GM12878 (cell line): ENCODE measurements at regions of chr17 and their contacts with region 1.

Region 1: GRCh38 chr17:75845049-75845860 is 1.1 kb upstream of the UNC13D start:
- DNase-seq: peak; percentile 81
- ATAC-seq: peak; percentile 89
- H3K4me3 ChIP-seq: peak overlapping the region; percentile 77; the same call in 1 of the 2 replicates
- H3K27ac ChIP-seq: peak overlapping the region; percentile 93
- H3K4me1 ChIP-seq: peaks cover 14% of the 10 kb centered on the region
- H3K27me3 ChIP-seq: no peaks in the 10 kb centered on the region
- CTCF ChIP-seq: peak; percentile 71 to 92 (median 89)
- EP300 ChIP-seq: 0 out of 4 replicates have a peak, but pooled peaks of 1 of the 2 experiments have one; percentile 20
- POLR2A ChIP-seq: peak; percentile 59; the same call in 1 of the 2 replicates
- RAD21 ChIP-seq: peak; percentile 50

Region 2: DNA sequence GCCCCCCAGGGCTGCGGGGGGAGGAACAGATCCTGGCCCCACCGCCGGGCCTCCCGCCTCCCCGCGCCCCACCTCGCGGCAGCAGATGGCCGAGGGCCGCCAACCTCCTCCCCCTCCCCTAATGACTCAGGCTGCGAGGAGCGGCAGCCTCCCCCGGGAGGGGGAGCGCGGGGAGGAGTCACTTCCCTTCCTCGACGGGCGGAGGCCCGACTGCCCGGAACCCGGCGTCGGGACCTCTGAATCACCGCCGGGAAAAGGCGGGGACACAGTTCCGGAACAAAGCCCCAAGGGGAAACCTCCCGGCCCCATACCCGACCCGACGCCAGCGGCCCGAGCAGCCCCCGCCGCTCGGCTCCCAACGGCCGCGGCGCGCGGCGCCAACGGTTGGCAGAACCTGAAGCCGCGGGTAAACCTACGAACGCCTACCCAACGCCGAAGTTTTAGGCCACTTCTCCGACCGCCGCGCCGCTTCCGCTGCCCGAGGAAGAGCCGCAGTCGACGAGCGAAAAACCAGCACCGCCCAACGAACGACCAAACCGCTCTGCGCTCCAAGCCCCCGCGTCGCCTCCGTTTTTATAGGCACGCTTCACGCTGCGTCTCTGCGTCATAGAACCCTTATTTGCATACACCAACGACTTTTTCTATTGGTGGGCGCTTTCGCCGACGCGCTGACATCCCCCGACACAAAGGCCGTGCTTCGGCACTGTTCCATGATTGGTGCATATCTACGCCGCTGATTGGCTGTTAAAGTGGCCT is 65.8 kb before region 1 on chr17:
- CTCF ChIA-PET with region 1: interaction called, 6 read pairs
- POLR2A ChIA-PET with region 1: interaction called, 31 read pairs
- RAD21 ChIA-PET with region 1: interaction called, 6 read pairs
- SMC1A ChIA-PET with region 1: interaction called, 11 read pairs
- in situ Hi-C with region 1: no loop called
- intact Hi-C with region 1: no loop called
- DNase-seq: peak; percentile 100
- ATAC-seq: peak; percentile 81
- H3K4me3 ChIP-seq: peak overlapping the region; percentile 88
- H3K27ac ChIP-seq: peak overlapping the region; percentile 90
- H3K4me1 ChIP-seq: peaks cover 16% of the 10 kb centered on the region
- H3K27me3 ChIP-seq: no peaks in the 10 kb centered on the region
- CTCF ChIP-seq: no peak
- EP300 ChIP-seq: peak in 1 of 2 experiments; percentile 24; a peak in 1 of 4 replicates
- POLR2A ChIP-seq: peak; percentile 100
- RAD21 ChIP-seq: no peak

Region 3: DNA sequence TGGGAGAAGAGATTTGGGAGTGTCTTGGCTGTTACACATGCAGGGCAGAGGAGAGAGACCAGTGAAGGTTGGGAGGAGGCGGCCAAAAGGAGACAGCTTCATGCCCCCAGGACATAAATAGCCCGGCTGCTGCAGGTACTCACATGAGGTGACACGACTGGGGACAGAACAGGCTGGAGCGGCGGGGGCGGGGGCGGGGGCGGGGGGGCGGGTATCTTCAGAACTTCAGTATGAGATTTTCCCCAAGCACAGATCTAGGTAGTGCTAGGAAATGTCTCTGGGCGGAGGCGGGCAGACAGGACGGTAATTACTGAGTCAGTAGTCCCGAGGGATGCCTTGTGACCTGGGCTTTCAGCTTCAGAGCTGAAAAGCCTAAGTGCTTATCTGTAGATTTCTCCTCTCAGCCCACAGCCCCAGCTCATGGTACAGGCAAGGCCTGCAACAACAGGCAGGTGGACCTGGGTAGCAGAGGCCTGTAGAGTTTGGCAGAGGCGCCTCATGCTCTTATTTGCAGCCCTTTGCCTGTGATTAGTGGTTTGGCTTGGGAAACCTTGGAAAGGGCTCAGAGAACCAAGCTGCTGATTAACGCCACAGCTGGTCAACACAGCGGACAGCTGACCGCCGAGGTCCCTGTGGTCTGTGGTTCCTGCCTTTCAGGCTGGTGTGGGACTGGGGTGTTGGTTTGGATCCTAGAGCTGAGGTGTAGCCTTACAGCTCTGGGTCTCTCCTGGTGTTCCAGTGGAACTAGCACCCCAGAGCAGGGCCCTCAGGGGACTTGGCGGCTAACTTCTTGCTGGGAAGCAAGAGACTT is 36.1 kb before region 1 on chr17:
- CTCF ChIA-PET with region 1: interaction called, 9 read pairs
- POLR2A ChIA-PET with region 1: interaction called, 4 read pairs
- RAD21 ChIA-PET with region 1: interaction called, 10 read pairs
- SMC1A ChIA-PET with region 1: no interaction called
- in situ Hi-C with region 1: no loop called
- intact Hi-C with region 1: no loop called
- DNase-seq: peak; percentile 57
- ATAC-seq: peak; percentile 90
- H3K4me3 ChIP-seq: no peak overlapping the region
- H3K27ac ChIP-seq: 0 out of 2 replicates have a peak overlapping the region, but pooled peaks have one; percentile 6
- H3K4me1 ChIP-seq: peaks cover 9% of the 10 kb centered on the region
- H3K27me3 ChIP-seq: no peaks in the 10 kb centered on the region
- CTCF ChIP-seq: no peak
- EP300 ChIP-seq: no peak
- POLR2A ChIP-seq: no peak
- RAD21 ChIP-seq: no peak

Region 4: DNA sequence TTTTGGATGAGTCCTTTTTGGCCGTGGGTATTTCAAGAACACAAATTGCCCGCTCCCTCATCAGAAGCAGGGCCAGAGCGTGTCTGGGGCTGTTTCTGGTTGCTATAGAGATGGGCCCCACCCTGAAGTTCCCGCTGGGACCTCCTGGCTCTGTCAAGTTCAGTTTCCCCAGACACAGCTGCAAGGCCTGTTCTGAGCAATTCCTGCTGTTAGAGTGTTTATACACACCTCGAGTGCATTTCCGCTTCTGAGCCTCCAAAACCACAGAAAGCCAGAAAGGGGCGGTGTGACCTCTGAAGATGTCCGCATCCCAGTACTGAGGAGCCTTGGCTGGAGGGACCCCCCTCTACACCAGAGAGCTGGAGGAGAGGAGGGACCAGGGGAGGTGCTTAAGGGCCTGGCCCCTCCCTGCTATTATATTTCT is 19.2 kb after region 1 on chr17:
- CTCF ChIA-PET with region 1: interaction called, 117 read pairs
- POLR2A ChIA-PET with region 1: interaction called, 39 read pairs
- RAD21 ChIA-PET with region 1: interaction called, 21 read pairs
- SMC1A ChIA-PET with region 1: interaction called, 14 read pairs
- in situ Hi-C with region 1: no loop called
- intact Hi-C with region 1: no loop called
- DNase-seq: peak; percentile 77
- ATAC-seq: peak; percentile 90
- H3K4me3 ChIP-seq: peak overlapping the region; percentile 22; the same call in 1 of the 2 replicates
- H3K27ac ChIP-seq: peak overlapping the region; percentile 29
- H3K4me1 ChIP-seq: peaks cover 22% of the 10 kb centered on the region
- H3K27me3 ChIP-seq: no peaks in the 10 kb centered on the region
- CTCF ChIP-seq: no peak
- EP300 ChIP-seq: peak in 1 of 2 experiments; percentile 38; a peak in 1 of 4 replicates
- POLR2A ChIP-seq: no peak
- RAD21 ChIP-seq: no peak

Region 5: GRCh38 chr17:76107509-76107908 is 262.3 kb after region 1 on chr17:
- CTCF ChIA-PET with region 1: no interaction called
- POLR2A ChIA-PET with region 1: no interaction called
- RAD21 ChIA-PET with region 1: no interaction called
- SMC1A ChIA-PET with region 1: no interaction called
- in situ Hi-C with region 1: no loop called
- intact Hi-C with region 1: no loop called
- DNase-seq: no peak
- ATAC-seq: no peak
- H3K4me3 ChIP-seq: no peak overlapping the region
- H3K27ac ChIP-seq: no peak overlapping the region
- H3K4me1 ChIP-seq: peaks cover 3% of the 10 kb centered on the region
- H3K27me3 ChIP-seq: no peaks in the 10 kb centered on the region
- CTCF ChIP-seq: peak in 2 of 3 experiments; percentile 17 to 32; a peak in 3 of 6 replicates
- EP300 ChIP-seq: no peak
- POLR2A ChIP-seq: no peak
- RAD21 ChIP-seq: no peak; the same call in 1 of the 2 replicates